Prostate gland (tissue), 2 donors: ENCODE measurements at regions of chr17 and their contacts with region 1.

Region 1: DNA sequence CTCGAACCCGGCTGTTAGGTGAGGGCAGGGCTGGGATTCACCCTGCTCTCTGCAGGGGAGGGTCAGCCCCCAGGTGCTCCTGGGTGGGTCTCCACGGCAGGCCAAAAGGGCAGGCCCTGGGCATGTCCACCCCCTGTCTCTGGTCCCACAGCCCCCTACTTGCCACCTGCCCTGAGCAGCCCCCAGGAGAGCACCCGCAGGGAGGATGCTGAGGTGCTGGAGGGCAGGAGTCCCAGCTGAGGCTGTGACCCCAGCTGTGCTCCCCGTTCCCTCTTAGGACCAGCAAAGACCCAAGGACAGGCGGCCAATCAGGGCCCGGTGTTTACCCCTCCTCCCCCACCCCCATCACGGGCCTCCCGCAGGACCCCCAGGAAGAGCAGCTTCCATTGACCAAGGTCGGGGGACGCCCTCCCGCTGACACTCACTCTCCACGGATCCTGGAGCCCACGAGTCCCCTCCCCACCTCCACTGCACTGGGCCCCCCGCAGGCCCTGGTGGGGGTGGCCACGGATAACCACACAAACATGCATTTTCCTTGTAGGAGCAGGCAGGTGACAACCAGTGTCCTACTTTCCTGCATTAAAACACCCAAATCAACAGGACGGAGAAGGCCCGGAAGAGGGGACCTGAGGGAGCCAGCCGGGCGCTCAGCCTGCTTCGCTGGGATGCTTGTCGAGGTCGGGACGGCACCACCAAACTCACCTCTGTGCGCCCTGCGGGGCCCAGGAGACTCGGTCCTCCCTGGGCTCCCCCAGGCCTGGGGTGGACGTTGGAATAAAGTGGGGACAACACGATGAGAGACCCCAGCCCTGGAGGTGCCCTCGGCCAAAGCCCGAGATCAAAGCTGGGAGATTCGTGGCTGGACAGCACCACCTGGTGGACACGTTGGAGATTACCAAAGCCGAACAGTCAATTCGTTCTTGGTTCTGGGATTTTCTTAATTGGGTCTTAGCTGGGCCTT is 22.5 kb upstream of the ENPP7 start:
- DNase-seq: peak; percentile 30
- H3K4me3 ChIP-seq: no peak overlapping the region
- H3K27ac ChIP-seq: no peak overlapping the region
- H3K4me1 ChIP-seq: no peaks in the 10 kb centered on the region
- H3K27me3 ChIP-seq: peaks cover 6% of the 10 kb centered on the region
- CTCF ChIP-seq: peak; percentile 82 to 87 (median 84)
- POLR2A ChIP-seq: no peak

Region 2: DNA sequence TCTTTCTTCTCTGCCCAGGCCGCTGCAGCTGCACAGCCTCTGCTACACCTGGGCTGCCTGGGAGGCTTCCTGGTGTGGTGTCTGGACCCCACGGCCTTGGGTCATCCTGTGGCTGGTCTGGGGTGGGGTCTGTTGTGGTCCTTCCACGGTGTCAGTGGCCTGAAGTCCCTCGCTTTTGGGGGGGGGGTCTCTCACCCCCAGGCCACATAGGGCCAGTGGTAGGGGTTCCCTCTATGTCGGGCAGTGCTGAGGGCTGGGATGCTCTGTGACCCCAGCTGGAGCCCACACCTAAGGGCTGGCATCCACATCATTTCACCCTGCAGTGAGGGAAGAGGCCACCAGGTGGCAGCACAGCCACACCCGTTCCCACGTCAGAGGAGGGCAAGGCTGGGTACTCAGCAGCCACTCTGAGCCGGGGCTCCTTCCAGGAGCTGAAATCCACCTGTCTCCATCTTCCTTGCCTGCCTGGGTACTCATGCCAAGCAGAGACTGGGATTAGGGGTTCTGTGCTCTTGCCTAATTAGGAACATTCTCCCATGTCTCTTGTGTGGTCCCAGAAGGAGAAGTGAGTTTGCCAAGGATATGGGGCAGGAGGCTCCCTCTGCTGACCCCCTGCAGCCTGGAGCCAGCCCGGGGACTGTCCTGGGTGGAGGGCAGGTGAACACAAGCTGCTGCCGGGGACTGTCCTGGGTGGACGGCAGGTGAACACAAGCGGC is 620.6 kb before region 1 on chr17:
- intact Hi-C with region 1: loop called (anchors 10 kb)
- DNase-seq: peak; percentile 68
- H3K4me3 ChIP-seq: no peak overlapping the region
- H3K27ac ChIP-seq: no peak overlapping the region
- H3K4me1 ChIP-seq: no peaks in the 10 kb centered on the region
- H3K27me3 ChIP-seq: no peaks in the 10 kb centered on the region
- CTCF ChIP-seq: peak; percentile 87 to 94 (median 93)
- POLR2A ChIP-seq: no peak

Region 3: GRCh38 chr17:79400989-79401703 is 307.1 kb before region 1 on chr17:
- intact Hi-C with region 1: loop called (anchors 5 kb)
- DNase-seq: peak; percentile 52
- H3K4me3 ChIP-seq: peak overlapping the region in 1 of 2 donors; percentile 9
- H3K27ac ChIP-seq: no peak overlapping the region
- H3K4me1 ChIP-seq: no peaks in the 10 kb centered on the region
- H3K27me3 ChIP-seq: peaks cover 7% of the 10 kb centered on the region
- CTCF ChIP-seq: peak; percentile 61 to 85 (median 80)
- POLR2A ChIP-seq: no peak

Region 4: DNA sequence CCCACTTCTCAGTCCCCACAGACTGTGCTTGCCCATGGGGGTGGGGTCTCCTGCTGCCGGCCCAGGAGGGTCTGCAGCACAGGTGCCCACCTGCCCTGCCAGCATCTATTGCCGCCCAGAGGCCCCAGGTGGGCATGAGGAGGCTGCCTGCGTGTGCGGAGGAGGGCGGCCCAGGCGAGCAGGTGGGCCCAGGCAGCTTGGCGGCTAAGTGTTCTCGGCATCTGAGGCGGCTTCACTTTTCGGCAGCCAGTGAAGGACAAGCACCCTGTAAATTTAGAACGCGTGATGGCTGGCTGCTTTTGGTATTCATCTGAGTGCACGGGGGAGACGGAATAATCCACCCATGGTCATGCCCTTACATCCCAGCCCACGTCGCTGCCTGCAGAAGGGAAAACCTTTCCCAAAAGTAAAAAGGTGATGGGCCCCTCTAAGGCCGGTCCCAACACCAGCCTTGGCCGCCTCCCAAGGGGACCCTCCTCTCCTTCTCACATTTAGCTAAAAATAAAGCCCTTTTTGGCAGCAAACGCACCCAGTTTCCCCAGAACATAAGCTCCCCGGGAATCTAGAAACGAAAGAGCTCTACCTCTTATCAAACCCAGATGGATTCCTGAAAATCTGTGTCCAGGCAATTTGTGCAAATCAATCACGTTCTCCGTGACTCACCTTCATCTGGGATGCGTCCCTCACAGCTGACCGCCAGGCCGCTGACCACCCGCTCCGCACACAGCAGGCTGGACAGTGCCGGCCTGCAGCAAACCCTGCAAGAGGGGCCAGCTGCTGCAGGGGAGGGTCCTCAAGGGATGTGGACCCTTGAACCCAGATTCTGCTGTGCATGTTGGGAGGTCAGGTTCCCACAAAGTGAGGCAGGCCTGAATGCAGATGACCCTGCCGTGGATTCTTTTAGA is 176.8 kb before region 1 on chr17:
- intact Hi-C with region 1: loop called (anchors 10 kb)
- DNase-seq: no peak
- H3K4me3 ChIP-seq: no peak overlapping the region
- H3K27ac ChIP-seq: no peak overlapping the region
- H3K4me1 ChIP-seq: no peaks in the 10 kb centered on the region
- H3K27me3 ChIP-seq: no peaks in the 10 kb centered on the region
- CTCF ChIP-seq: no peak
- POLR2A ChIP-seq: no peak

Region 5: DNA sequence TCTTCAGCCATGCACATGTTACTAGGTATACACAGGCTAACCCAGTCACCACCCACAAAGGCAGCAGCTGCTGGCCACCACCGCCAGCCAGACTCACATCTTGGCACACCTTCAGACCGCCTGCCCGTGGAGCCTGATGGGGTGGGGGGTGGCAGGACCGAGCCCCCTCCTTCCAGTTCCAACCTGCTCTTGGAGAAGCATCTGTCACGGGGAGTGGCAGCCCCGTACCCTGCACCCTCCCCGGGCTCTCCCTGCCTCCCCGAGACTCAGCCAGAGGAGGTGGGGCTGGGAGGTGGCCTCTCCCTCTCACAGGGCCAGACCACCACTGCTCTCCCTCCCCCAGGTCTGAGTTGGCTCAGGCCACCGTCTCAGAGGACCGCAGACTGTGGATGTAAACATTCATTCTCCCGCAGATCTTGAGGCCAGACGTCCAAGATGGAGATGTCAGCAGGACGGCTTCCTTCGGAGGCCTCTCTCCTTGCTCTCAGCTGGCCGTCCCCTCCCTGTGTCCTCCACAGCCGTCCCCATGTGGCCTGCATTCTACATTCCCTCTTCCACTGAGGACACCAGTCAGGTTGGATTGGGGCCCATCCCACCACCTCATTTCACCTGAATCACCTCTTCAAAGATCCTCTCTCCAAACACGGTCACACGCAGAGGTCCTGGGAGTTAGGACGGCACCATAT is 85.9 kb before region 1 on chr17:
- intact Hi-C with region 1: no loop called
- DNase-seq: no peak
- H3K4me3 ChIP-seq: no peak overlapping the region
- H3K27ac ChIP-seq: no peak overlapping the region
- H3K4me1 ChIP-seq: no peaks in the 10 kb centered on the region
- H3K27me3 ChIP-seq: no peaks in the 10 kb centered on the region
- CTCF ChIP-seq: no peak
- POLR2A ChIP-seq: no peak

Region 6: GRCh38 chr17:79760197-79760906 is 52.1 kb after region 1 on chr17:
- intact Hi-C with region 1: no loop called
- DNase-seq: no peak
- H3K4me3 ChIP-seq: no peak overlapping the region
- H3K27ac ChIP-seq: no peak overlapping the region
- H3K4me1 ChIP-seq: no peaks in the 10 kb centered on the region
- H3K27me3 ChIP-seq: no peaks in the 10 kb centered on the region
- CTCF ChIP-seq: no peak
- POLR2A ChIP-seq: no peak